Sciatic nerve (tissue), 2 donors: ENCODE measurements at regions of chr17 and their contacts with region 1.

Region 1: DNA sequence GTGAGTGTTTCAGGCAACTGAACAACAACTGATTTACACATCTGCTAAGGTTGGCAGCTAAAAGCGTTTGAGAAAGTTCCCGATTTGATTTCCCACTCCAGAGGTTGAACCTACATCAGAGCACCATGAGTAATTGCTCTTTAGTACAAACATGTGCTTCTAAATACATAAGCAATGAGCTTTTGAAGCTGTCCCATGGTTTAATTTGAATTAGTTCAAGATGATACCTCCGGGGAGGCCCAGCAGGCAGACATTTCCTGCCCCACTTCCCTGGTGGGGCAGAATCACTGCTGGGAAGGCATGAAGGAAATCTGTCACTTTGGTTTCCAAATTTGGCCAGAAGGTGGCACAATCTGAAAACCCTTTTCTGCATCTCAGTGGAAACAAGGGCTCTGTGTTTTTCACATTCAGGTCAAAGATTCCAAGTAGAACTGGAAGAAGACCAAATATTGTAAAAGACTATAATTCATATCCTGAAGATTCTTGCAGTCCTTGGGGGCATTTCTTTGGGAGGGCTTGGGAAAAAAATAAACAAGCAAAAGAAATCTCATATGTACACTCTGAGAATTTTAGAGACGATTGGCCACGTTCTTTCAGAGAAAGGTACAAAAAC is 176.2 kb upstream of the FAM20A start:
- DNase-seq: peak; percentile 80
- ATAC-seq: peak; percentile 86

Region 2: DNA sequence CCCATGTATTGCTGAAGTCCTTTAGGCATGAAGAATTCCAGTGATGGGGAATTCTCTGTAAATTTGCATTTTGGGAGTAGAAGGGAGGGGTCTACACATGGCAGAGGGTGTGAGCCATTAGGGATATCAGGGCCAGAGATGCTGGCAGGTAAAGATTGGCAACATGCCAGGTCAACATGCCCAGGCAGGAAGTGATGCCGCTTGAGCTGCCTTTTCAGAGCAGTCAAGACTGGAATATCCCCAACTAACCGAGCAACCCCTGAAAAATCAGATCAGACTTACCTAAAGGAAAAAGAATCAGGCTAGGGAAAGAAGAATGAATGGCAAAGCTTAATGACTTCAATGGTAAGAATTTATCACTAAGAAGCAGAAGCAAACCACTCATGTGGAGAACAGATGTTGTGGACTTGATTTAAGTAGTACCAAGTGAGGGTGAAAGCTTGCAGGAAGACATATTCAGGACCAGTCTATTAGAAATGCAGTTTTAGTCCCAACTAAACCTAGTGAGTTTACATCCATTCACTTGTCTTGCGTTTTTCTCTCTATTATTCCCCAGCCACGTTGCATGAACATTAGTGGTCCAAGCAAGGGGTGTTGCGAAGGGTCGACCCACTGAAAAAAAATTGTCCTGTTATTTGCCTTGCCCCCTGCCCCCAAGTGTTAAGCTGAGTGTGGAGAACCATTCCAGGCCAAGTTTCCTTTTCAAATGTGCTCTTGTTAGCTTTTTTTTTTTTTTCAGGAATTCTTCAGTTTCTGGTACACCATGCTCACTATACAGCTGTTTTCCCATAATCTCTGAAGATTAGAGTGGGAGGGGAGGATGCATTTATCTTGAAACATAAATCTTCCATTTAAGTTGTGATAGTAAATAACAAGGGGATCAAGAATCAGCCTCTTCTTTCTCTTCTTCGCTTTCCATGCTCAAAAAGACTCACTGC is 72.6 kb after region 1 on chr17:
- intact Hi-C with region 1: no loop called
- DNase-seq: no peak
- ATAC-seq: no peak

Region 3: GRCh38 chr17:68972119-68972704 is 194.9 kb after region 1 on chr17:
- intact Hi-C with region 1: loop called (anchors 5 kb)
- DNase-seq: no peak
- ATAC-seq: peak; percentile 72